Breast epithelium (tissue), 4 donors: ENCODE measurements at regions of chr3 and their contacts with region 1.

Region 1: GRCh38 chr3:122468896-122469533 is 45.7 kb downstream of the KPNA1 start:
- DNase-seq: no peak
- H3K4me3 ChIP-seq: no peak overlapping the region
- H3K27ac ChIP-seq: no peak overlapping the region
- H3K4me1 ChIP-seq: no peaks in the 10 kb centered on the region
- H3K27me3 ChIP-seq: no peaks in the 10 kb centered on the region
- CTCF ChIP-seq: no peak
- POLR2A ChIP-seq: no peak

Region 2: DNA sequence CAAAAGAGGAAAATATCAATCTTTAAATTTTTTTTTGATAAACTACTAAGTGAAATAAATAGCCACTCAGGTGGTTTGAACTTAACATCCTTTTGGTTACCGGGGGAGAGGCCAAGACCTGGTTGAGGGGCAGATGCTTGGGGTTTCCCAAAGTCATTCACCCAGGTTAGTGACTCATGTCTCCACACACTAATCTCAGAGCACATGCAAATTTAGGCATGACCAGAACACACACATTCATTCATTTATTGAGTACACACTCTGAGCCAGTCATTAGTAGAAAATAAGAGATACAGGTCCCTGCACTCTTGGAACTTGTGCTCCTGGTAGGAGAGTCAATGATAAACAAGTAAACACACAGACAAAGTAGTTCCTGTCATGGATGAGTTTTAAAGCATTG is 454.3 kb before region 1 on chr3:
- intact Hi-C with region 1: loop called (anchors 5 kb)
- DNase-seq: no peak
- H3K4me3 ChIP-seq: no peak overlapping the region
- H3K27ac ChIP-seq: no peak overlapping the region
- H3K4me1 ChIP-seq: no peaks in the 10 kb centered on the region
- H3K27me3 ChIP-seq: no peaks in the 10 kb centered on the region
- CTCF ChIP-seq: no peak
- POLR2A ChIP-seq: no peak

Region 3: GRCh38 chr3:122497425-122497824 is 28.4 kb after region 1 on chr3:
- intact Hi-C with region 1: no loop called
- DNase-seq: no peak
- H3K4me3 ChIP-seq: no peak overlapping the region
- H3K27ac ChIP-seq: no peak overlapping the region
- H3K4me1 ChIP-seq: no peaks in the 10 kb centered on the region
- H3K27me3 ChIP-seq: no peaks in the 10 kb centered on the region
- CTCF ChIP-seq: no peak
- POLR2A ChIP-seq: no peak

Region 4: DNA sequence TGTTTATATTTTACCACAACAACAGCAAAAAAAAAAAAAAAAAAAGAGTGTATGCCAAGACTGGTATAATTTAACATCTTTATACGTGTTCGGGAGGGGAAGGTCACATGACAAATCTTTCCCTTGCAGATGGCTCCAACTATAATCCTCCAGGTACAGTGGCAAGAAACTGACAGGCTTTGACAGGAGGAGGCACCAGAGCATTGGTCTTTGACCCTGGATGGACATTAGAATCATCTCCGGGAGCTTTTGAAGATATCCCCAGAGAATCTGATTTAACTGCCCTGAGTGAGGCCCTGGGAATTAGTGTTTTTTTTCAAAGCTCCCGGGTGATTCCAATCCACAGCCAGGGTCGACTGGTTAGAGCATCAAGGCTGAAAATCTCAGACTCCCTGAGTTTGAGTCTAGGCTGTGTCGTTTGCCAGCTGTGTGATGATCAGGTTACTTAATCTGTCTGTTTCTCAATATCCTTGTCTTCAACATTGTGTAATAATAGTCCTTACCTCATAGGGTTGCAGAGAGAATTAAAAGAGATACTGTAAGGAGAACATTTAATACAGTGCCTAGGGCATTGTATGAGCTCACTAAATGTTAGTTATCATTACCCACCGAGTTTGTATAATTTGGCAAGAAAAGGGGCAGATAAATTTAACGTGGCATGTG is 567.5 kb after region 1 on chr3:
- intact Hi-C with region 1: loop called (anchors 5 kb)
- DNase-seq: no peak
- H3K4me3 ChIP-seq: no peak overlapping the region
- H3K27ac ChIP-seq: no peak overlapping the region
- H3K4me1 ChIP-seq: no peaks in the 10 kb centered on the region
- H3K27me3 ChIP-seq: no peaks in the 10 kb centered on the region
- CTCF ChIP-seq: no peak
- POLR2A ChIP-seq: no peak